ENCODE measurements at regions of chr6 and their contacts with region 1.

Region 1: DNA sequence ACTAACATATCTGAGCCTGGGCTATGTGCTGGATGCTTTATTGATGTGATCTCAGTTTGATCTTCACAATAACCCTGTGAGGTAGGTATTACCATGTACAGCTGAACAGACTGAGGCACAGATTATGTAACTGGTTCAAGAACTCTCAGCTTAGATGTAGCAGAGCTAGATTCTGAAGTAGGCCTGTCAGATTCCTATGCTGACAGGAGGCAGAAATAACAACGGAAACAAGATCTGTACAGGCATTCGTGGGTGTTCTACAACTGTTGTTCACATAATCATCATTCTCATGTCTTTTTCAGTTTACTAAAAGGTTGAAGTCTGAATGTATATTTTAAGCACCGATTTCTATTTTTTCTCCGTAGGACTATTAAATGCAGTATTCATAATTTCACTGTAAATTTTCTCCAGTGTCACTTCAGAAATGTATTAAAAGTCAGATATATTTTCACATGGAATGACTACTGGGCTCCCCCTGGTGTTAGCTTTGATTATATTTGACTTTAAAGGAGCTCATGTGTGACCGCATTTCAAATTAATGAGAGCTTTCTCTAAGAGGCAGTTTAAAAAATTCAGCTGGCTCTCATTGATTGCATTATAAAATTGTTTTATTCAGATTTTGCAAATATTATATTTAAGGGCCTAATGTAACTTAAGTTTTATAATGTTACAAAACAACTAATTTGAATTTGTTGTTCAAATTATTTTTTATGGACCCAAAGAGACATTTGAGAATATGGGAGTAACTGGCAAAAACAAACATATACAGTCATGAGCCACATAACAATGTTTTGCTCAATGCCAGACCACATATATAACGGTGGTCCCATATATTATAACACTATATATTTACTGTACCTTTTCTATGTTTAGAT is 36.4 kb upstream of the SLC17A4 start:
- DNase-seq: peak; percentile 57
- H3K4me3 Mint-ChIP-seq: no peak overlapping the region
- H3K27ac Mint-ChIP-seq: no peak overlapping the region
- H3K4me1 Mint-ChIP-seq: peaks cover 6% of the 10 kb centered on the region
- H3K27me3 Mint-ChIP-seq: no peaks in the 10 kb centered on the region
- CTCF ChIP-seq: peak; percentile 62

Region 2: DNA sequence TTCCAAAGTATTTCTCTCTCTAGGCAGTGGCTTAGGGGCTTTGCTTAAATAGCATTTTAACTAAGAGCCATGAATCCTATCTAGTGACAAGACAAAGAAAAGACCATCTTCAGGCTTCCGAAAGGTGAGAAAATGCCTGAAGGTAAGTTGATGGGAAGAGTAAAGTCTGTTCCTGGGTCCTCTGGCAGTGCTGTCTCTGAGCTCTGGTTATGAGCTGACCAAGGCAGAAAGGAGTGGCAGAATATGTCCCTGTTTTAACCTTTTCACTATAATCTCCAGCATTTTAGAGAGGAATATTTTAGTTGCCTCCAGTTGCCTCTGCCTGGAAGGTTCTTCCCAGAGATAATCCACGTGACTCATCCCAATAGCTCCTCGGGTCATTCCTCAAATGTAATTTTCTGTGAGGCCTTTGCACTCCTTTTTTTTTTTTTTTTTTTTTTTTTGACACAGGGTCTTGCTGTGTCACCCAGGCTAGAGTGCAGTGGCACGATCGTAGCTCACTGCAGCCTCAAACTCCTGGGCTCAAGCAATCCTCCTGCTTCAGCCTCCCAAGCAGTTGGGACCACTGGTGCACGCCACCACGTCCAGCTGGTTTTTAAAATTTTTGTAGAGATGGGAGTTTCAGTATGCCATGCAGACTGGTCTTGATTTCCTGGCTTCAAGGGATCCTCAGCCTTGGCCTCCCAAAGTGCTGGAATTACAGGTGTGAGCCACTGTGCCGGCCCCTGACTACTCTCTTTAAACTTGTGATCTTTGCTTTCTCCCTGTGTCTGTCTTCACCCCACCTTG is 915.6 kb before region 1 on chr6:
- CTCF ChIA-PET with region 1: no interaction called
- POLR2A ChIA-PET with region 1: no interaction called
- intact Hi-C with region 1: no loop called
- DNase-seq: no peak
- H3K4me3 Mint-ChIP-seq: no peak overlapping the region
- H3K27ac Mint-ChIP-seq: peak overlapping the region; percentile 18
- H3K4me1 Mint-ChIP-seq: peaks cover 8% of the 10 kb centered on the region
- H3K27me3 Mint-ChIP-seq: no peaks in the 10 kb centered on the region
- CTCF ChIP-seq: no peak

Region 3: GRCh38 chr6:25404693-25405169 is 313.4 kb before region 1 on chr6:
- CTCF ChIA-PET with region 1: no interaction called
- POLR2A ChIA-PET with region 1: no interaction called
- intact Hi-C with region 1: no loop called
- DNase-seq: peak; percentile 9
- H3K4me3 Mint-ChIP-seq: no peak overlapping the region
- H3K27ac Mint-ChIP-seq: no peak overlapping the region
- H3K4me1 Mint-ChIP-seq: no peaks in the 10 kb centered on the region
- H3K27me3 Mint-ChIP-seq: no peaks in the 10 kb centered on the region
- CTCF ChIP-seq: no peak

Region 4: DNA sequence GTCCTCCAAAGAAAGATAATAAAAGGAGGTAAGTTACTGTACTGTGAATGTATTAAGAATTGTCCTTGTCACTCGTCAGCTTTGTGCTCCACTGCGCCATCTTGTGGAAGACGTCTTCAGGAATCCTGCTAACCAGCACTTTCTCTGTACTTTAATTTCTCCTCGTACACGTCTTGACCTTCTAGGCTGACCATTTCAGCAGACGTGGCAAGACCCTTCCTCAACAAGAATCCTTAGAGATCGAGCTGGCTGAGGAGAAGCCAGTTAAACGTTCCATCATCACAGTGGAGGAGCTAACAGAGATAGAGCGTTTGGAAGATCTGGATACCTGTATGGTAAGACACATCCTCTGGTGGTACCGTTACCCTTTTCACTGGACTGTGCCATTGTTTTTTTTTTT is 161.6 kb before region 1 on chr6:
- CTCF ChIA-PET with region 1: no interaction called
- POLR2A ChIA-PET with region 1: no interaction called
- intact Hi-C with region 1: loop called (anchors 1 kb)
- DNase-seq: peak; percentile 83
- H3K4me3 Mint-ChIP-seq: no peak overlapping the region
- H3K27ac Mint-ChIP-seq: no peak overlapping the region
- H3K4me1 Mint-ChIP-seq: peaks cover 5% of the 10 kb centered on the region
- H3K27me3 Mint-ChIP-seq: no peaks in the 10 kb centered on the region
- CTCF ChIP-seq: peak; percentile 69

Region 5: DNA sequence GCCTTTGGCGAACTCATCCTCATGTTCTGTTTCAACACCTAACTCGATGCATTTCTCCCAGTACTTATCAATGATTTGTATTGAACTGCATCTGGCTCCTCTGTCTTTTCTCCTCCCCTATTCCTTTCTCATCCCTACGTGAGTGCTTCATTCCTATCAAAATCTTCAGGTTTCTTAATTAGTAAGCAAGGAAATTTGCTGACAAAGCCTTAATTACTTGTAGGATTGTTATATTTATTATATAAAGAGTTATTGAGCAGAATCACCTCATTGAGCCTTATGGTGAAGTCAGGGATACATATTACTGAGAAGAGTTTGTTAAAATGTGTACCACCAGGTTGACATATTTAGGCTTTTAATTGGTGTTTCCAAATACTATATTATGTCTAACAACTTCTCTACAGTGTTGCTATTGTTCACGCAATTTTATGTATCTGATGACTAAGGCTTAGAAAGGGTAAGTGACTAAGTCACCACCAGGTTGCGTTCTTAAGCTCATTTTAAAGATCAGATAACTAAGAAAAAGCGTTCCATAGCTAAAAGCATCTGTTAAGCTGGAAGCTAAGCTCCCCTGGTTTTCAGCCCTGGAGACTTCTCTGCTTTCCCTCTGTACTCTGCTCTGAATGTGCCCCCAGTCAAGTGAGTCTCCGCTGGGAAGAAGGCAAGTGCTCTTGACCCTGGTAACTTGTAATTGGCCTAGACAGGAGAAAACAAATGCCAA is 47.1 kb before region 1 on chr6:
- CTCF ChIA-PET with region 1: interaction called, 42 read pairs
- POLR2A ChIA-PET with region 1: no interaction called
- intact Hi-C with region 1: loop called (anchors 1 kb)
- DNase-seq: peak; percentile 38
- H3K4me3 Mint-ChIP-seq: no peak overlapping the region
- H3K27ac Mint-ChIP-seq: no peak overlapping the region
- H3K4me1 Mint-ChIP-seq: no peaks in the 10 kb centered on the region
- H3K27me3 Mint-ChIP-seq: no peaks in the 10 kb centered on the region
- CTCF ChIP-seq: no peak

Region 6: DNA sequence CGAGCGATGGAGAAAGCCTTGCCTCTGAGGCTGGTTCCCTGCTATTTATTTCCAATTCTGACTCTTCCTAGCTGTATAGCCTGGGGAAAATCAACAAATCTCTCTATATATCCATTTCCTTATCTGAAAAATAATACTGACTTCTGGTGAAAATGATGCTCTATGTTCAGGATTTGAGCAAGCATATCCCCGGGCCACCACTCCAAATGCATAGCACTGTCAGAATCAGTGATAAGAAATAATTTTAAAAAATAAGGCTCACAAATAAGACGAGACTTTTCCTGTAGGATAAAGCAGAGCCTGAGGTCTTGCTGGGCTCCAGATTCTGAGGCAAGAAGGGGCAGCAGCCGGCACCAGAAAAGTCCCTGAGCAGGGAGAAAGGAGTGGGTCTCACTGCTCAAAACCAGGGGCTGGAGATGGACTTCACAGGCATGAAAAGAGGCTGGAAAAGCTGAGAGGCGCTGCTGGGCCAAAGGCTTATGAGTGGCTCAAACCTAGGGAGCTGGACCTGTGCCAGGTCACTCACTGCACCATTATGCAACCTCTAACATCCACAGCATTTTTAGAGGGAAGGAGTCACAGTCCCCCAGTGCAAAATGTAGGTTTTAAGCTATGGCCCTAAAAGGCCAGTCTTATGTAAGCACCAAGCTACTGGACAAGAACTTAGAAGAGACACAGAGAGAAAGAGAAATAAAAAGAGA is 11.6 kb before region 1 on chr6:
- CTCF ChIA-PET with region 1: interaction called, 25 read pairs
- POLR2A ChIA-PET with region 1: interaction called, 6 read pairs
- intact Hi-C with region 1: no loop called
- DNase-seq: peak; percentile 78
- H3K4me3 Mint-ChIP-seq: no peak overlapping the region
- H3K27ac Mint-ChIP-seq: no peak overlapping the region
- H3K4me1 Mint-ChIP-seq: peaks cover 5% of the 10 kb centered on the region
- H3K27me3 Mint-ChIP-seq: peaks cover 21% of the 10 kb centered on the region
- CTCF ChIP-seq: no peak

Region 7: GRCh38 chr6:25889877-25890853 is 172.1 kb after region 1 on chr6:
- CTCF ChIA-PET with region 1: interaction called, 29 read pairs
- POLR2A ChIA-PET with region 1: interaction called, 6 read pairs
- intact Hi-C with region 1: loop called (anchors 1 kb)
- DNase-seq: peak; percentile 75
- H3K4me3 Mint-ChIP-seq: no peak overlapping the region
- H3K27ac Mint-ChIP-seq: no peak overlapping the region
- H3K4me1 Mint-ChIP-seq: no peaks in the 10 kb centered on the region
- H3K27me3 Mint-ChIP-seq: no peaks in the 10 kb centered on the region
- CTCF ChIP-seq: peak; percentile 60

Measured in MCF 10A (cell line).